Naive thymus-derived CD8-positive, alpha-beta T cell (primary cell): ENCODE measurements at regions of chr12 and their contacts with region 1.

Region 1: GRCh38 chr12:12803186-12803585 is 10.0 kb upstream of the DDX47 start:
- DNase-seq: peak in 2 of 10 donors; percentile 13 to 69
- ATAC-seq: peak in 1 of 2 donors; percentile 59
- H3K4me3 Mint-ChIP-seq: peak overlapping the region in 3 of 10 donors; percentile 6 to 22 (median 16)
- H3K27ac Mint-ChIP-seq: peak overlapping the region in 8 of 10 donors; percentile 41 to 87 (median 80)
- H3K4me1 Mint-ChIP-seq: peaks cover 18 to 59% (median 41%) of the 10 kb centered on the region in 4 donors
- H3K27me3 Mint-ChIP-seq: no peaks in the 10 kb centered on the region

Region 2: GRCh38 chr12:12582895-12583303 is 220.3 kb before region 1 on chr12:
- POLR2A ChIA-PET with region 1: no interaction called
- DNase-seq: no peak
- ATAC-seq: no peak
- H3K4me3 Mint-ChIP-seq: no peak overlapping the region
- H3K27ac Mint-ChIP-seq: no peak overlapping the region
- H3K4me1 Mint-ChIP-seq: peaks cover 0 to 8% (median under 1%) of the 10 kb centered on the region in 4 donors
- H3K27me3 Mint-ChIP-seq: peaks cover 0 to 6% (median under 1%) of the 10 kb centered on the region in 5 donors

Region 3: DNA sequence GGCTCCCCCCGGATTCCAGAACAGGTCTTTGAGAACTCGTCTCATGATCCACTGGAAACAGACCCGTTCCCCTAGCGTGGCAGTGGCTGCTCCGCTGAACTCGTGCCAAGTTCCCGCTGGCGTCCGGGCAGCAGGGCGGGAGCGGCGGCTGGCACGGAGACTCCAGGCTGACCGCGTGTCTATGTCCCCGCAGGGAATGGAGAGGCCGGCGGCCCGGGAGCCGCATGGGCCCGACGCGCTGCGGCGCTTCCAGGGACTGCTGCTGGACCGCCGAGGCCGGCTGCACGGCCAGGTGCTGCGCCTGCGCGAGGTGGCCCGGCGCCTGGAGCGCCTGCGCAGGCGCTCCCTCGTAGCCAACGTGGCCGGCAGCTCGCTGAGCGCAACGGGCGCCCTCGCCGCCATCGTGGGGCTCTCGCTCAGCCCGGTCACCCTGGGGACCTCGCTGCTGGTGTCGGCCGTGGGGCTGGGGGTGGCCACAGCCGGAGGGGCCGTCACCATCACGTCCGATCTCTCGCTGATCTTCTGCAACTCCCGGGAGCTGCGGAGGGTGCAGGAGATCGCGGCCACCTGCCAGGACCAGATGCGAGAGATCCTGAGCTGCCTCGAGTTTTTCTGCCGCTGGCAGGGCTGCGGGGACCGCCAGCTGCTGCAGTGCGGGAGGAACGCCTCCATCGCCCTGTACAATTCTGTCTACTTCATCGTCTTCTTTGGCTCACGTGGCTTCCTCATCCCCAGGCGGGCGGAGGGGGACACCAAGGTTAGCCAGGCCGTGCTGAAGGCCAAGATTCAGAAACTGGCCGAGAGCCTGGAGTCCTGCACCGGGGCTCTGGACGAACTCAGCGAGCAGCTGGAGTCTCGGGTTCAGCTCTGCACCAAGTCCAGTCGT is 16.2 kb before region 1 on chr12:
- POLR2A ChIA-PET with region 1: interaction called, 46 read pairs
- DNase-seq: peak; percentile 53 to 83 (median 73)
- ATAC-seq: peak; percentile 85 to 90
- H3K4me3 Mint-ChIP-seq: peak overlapping the region; percentile 80 to 91 (median 85)
- H3K27ac Mint-ChIP-seq: peak overlapping the region; percentile 79 to 96 (median 92)
- H3K4me1 Mint-ChIP-seq: peaks cover 4 to 26% (median 20%) of the 10 kb centered on the region in 4 donors
- H3K27me3 Mint-ChIP-seq: no peaks in the 10 kb centered on the region

Region 4: GRCh38 chr12:12813120-12814101 is 10.2 kb after region 1 on chr12 and contains the start of gene DDX47:
- POLR2A ChIA-PET with region 1: interaction called, 16 read pairs
- DNase-seq: peak; percentile 89 to 99 (median 96)
- ATAC-seq: peak; percentile 74 to 75
- H3K4me3 Mint-ChIP-seq: peak within 1 kb of the TSS; percentile 82 to 97 (median 92)
- H3K27ac Mint-ChIP-seq: peak within 1 kb of the TSS; percentile 90 to 98 (median 95)
- H3K4me1 Mint-ChIP-seq: peaks cover 30 to 83% (median 70%) of the 10 kb centered on the region in 4 donors
- H3K27me3 Mint-ChIP-seq: no peaks in the 10 kb centered on the region
- polyA plus RNA-seq, gene DDX47: 61.0 to 77.1 (median 62.7) TPM